ENCODE measurements at regions of chr3 and their contacts with region 1.

Region 1: GRCh38 chr3:79019137-79019923 is 748.5 kb downstream of the ROBO1 start:
- DNase-seq: peak; percentile 57
- ATAC-seq: peak; percentile 92
- H3K4me3 ChIP-seq: peak overlapping the region; percentile 58 to 87
- H3K27ac ChIP-seq: peak overlapping the region; percentile 90
- H3K4me1 ChIP-seq: peaks cover 18% of the 10 kb centered on the region
- H3K27me3 ChIP-seq: no peaks in the 10 kb centered on the region
- CTCF ChIP-seq: no peak

Region 2: GRCh38 chr3:78857494-78858111 is 161.7 kb before region 1 on chr3:
- CTCF ChIA-PET with region 1: no interaction called
- POLR2A ChIA-PET with region 1: no interaction called
- in situ Hi-C with region 1: no loop called
- intact Hi-C with region 1: loop called (anchors 10 kb)
- DNase-seq: no peak
- ATAC-seq: peak; percentile 77
- H3K4me3 ChIP-seq: no peak overlapping the region
- H3K27ac ChIP-seq: peak overlapping the region; percentile 29; the same call in 1 of the 2 replicates
- H3K4me1 ChIP-seq: peaks cover 11% of the 10 kb centered on the region
- H3K27me3 ChIP-seq: no peaks in the 10 kb centered on the region
- CTCF ChIP-seq: peak; percentile 65

Region 3: DNA sequence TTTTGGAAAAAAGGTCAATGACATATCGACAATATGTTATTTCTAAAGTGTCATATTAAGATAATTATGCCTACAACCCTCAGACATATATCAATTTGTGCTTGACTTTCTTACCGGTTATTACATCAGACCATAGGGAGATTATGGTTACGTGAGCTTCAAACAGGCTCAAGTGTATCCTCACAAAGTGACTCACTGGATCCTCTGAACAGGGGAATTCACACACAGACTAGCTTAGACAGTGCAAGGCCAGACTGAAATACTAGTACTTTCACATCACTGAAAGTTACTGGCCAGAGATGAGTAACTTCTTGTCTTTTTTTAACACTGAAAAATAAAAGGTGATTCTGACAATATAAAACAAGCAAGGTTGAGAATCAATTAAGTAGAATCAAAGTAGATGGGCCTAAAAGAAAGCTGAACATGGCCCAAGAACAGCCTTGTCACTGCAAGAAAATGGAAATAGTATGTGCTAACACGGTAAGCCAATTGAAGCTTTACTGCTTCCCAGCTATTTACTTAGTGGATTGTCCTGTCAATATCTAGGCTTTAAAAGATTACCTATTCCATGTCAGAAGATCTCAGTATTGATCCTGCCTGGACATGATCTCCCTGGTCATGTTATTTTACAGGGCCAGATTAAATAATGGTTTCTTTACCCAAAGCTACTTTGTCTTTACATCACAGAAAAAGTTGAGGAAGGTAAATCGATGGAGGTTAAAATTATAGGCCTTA is 100.1 kb before region 1 on chr3:
- CTCF ChIA-PET with region 1: no interaction called
- POLR2A ChIA-PET with region 1: no interaction called
- in situ Hi-C with region 1: no loop called
- intact Hi-C with region 1: loop called (anchors 10 kb)
- DNase-seq: no peak
- ATAC-seq: peak; percentile 84
- H3K4me3 ChIP-seq: no peak overlapping the region
- H3K27ac ChIP-seq: peak overlapping the region; percentile 75; the same call in 1 of the 2 replicates
- H3K4me1 ChIP-seq: peaks cover 9% of the 10 kb centered on the region
- H3K27me3 ChIP-seq: no peaks in the 10 kb centered on the region
- CTCF ChIP-seq: no peak

Region 4: GRCh38 chr3:78969483-78969882 is 49.8 kb before region 1 on chr3:
- CTCF ChIA-PET with region 1: no interaction called
- POLR2A ChIA-PET with region 1: interaction called, 18 read pairs
- in situ Hi-C with region 1: no loop called
- intact Hi-C with region 1: no loop called
- DNase-seq: no peak
- ATAC-seq: no peak
- H3K4me3 ChIP-seq: no peak overlapping the region
- H3K27ac ChIP-seq: no peak overlapping the region
- H3K4me1 ChIP-seq: no peaks in the 10 kb centered on the region
- H3K27me3 ChIP-seq: no peaks in the 10 kb centered on the region
- CTCF ChIP-seq: no peak

Region 5: DNA sequence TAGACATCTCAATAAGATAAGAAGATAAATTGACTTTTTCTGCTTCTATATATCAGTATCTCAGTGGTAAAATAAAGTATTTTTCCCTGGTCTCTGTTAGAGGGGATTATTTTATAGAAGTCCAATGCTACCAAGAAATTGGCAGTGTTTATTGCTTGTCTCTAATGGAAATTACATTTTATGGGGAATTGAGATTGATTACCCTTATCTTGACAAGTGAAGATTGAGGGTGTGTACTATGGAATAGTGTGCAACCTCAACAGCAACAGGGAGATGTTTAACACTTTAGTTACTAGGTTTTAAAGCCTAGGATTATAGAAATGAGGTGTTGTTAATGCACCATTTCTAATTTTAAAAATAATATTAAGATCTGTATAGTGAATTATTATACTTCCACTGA is 903.3 kb after region 1 on chr3:
- CTCF ChIA-PET with region 1: no interaction called
- POLR2A ChIA-PET with region 1: no interaction called
- in situ Hi-C with region 1: no loop called
- intact Hi-C with region 1: no loop called
- DNase-seq: no peak
- ATAC-seq: no peak
- H3K4me3 ChIP-seq: no peak overlapping the region
- H3K27ac ChIP-seq: no peak overlapping the region
- H3K4me1 ChIP-seq: no peaks in the 10 kb centered on the region
- H3K27me3 ChIP-seq: no peaks in the 10 kb centered on the region
- CTCF ChIP-seq: no peak